ENCODE measurements at regions of chr6 and their contacts with region 1.

Region 1: GRCh38 chr6:42831237-42831636 is 48.2 kb upstream of the RPL7L1 start:
- DNase-seq: no peak
- H3K4me3 ChIP-seq: no peak overlapping the region
- H3K27me3 ChIP-seq: no peaks in the 10 kb centered on the region
- CTCF ChIP-seq: no peak

Region 2: GRCh38 chr6:42808492-42809483 is 22.4 kb before region 1 on chr6:
- CTCF ChIA-PET with region 1: interaction called, 3 read pairs
- POLR2A ChIA-PET with region 1: interaction called, 14 read pairs
- DNase-seq: no peak
- H3K4me3 ChIP-seq: no peak overlapping the region
- H3K27me3 ChIP-seq: no peaks in the 10 kb centered on the region
- CTCF ChIP-seq: no peak